ENCODE measurements at regions of chr12 and their contacts with region 1.

Region 1: GRCh38 chr12:62435303-62436163 is 31.1 kb upstream of the MON2 start:
- DNase-seq: peak; percentile 49
- H3K4me3 ChIP-seq: peak overlapping the region; percentile 30 to 31
- H3K27ac ChIP-seq: no peak overlapping the region
- H3K4me1 ChIP-seq: no peaks in the 10 kb centered on the region
- H3K27me3 ChIP-seq: no peaks in the 10 kb centered on the region
- CTCF ChIP-seq: peak in 2 of 4 experiments; percentile 32 to 38
- POLR2A ChIP-seq: no peak

Region 2: GRCh38 chr12:62581288-62582064 is 145.9 kb after region 1 on chr12:
- intact Hi-C with region 1: loop called (anchors 10 kb)
- DNase-seq: no peak
- H3K4me3 ChIP-seq: no peak overlapping the region
- H3K27ac ChIP-seq: no peak overlapping the region
- H3K4me1 ChIP-seq: no peaks in the 10 kb centered on the region
- H3K27me3 ChIP-seq: no peaks in the 10 kb centered on the region
- CTCF ChIP-seq: peak in 3 of 4 experiments; percentile 59 to 78 (median 72)
- POLR2A ChIP-seq: no peak

Region 3: DNA sequence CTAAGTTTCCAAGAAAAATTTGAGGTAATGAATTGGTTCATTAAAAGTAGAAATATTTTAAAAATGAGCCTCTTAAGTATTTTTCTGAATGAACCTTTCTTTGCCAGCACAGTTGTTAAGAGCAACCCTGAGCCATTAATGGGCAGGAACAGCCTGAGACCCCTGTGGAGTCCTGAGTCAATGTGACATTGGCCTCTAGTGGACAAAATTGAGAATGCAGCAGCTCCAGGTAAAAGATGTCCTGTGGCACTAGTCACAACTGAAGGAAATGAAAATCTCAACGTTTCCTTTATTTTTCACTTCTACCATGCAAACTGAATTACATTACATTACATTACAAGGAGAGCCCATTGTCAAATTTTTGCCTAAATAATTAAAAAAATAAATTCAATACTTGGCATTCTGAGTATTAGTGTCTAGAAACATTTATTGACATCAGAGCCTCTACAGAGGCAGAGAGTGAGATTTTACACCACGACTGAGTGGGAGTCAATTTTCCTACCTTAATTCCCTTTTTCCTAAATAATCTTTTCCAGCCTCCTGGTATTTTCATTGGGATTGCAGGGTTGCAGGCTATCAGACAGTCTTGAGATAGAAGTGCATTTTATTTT is 363.7 kb after region 1 on chr12:
- intact Hi-C with region 1: loop called (anchors 5 kb)
- DNase-seq: peak; percentile 60
- H3K4me3 ChIP-seq: no peak overlapping the region
- H3K27ac ChIP-seq: peak overlapping the region; percentile 63 to 75
- H3K4me1 ChIP-seq: no peaks in the 10 kb centered on the region
- H3K27me3 ChIP-seq: no peaks in the 10 kb centered on the region
- CTCF ChIP-seq: peak; percentile 65 to 88 (median 80)
- POLR2A ChIP-seq: no peak